ENCODE measurements at regions of chr11 and their contacts with region 1.

Region 1: GRCh38 chr11:118689851-118690552 is 10.6 kb upstream of the TREH start:
- DNase-seq: peak; percentile 90 to 99
- H3K4me3 ChIP-seq: peak overlapping the region in 3 of 4 experiments; percentile 54 to 56 (median 54); a peak in 7 of 8 replicates
- H3K27ac ChIP-seq: peak overlapping the region; percentile 43; the same call in 1 of the 2 replicates
- H3K4me1 ChIP-seq: peaks cover 0 to 19% (median 11%) of the 10 kb centered on the region in 4 experiments; a peak in 6 of 7 replicates
- H3K27me3 ChIP-seq: no peaks in the 10 kb centered on the region
- CTCF ChIP-seq: peak; percentile 96 to 100 (median 97)
- EP300 ChIP-seq: no peak
- POLR2A ChIP-seq: no peak
- RAD21 ChIP-seq: peak; percentile 89 to 92

Region 2: GRCh38 chr11:118251858-118252652 is 437.9 kb before region 1 on chr11 and contains the start of gene MPZL3:
- CTCF ChIA-PET with region 1: no interaction called
- POLR2A ChIA-PET with region 1: no interaction called
- DNase-seq: peak; percentile 29 to 87
- H3K4me3 ChIP-seq: peak within 1 kb of the TSS; percentile 83 to 97 (median 90)
- H3K27ac ChIP-seq: peak within 1 kb of the TSS; percentile 99
- H3K4me1 ChIP-seq: no peaks in the 10 kb centered on the region
- H3K27me3 ChIP-seq: peaks cover 0 to 5% (median under 1%) of the 10 kb centered on the region in 4 experiments; a peak in 2 of 7 replicates
- CTCF ChIP-seq: no peak
- EP300 ChIP-seq: no peak
- POLR2A ChIP-seq: peak; percentile 69 to 72
- RAD21 ChIP-seq: no peak; a peak in 1 of 4 replicates
- total RNA-seq, gene MPZL3: 3.3 and 3.9 TPM in 2 replicates

Region 3: GRCh38 chr11:118679483-118679882 is 10.5 kb before region 1 on chr11 and contains the start of gene TREH:
- CTCF ChIA-PET with region 1: interaction called, 23 read pairs
- POLR2A ChIA-PET with region 1: no interaction called
- DNase-seq: no peak
- H3K4me3 ChIP-seq: no peak within 1 kb of the TSS
- H3K27ac ChIP-seq: no peak within 1 kb of the TSS
- H3K4me1 ChIP-seq: peaks cover 0 to 3% (median under 1%) of the 10 kb centered on the region in 4 experiments; a peak in 2 of 7 replicates
- H3K27me3 ChIP-seq: no peaks in the 10 kb centered on the region
- CTCF ChIP-seq: no peak
- EP300 ChIP-seq: no peak
- POLR2A ChIP-seq: no peak
- RAD21 ChIP-seq: no peak
- total RNA-seq, gene TREH: not detected in 2 replicates

Region 4: GRCh38 chr11:118715245-118715831 is 25.3 kb after region 1 on chr11:
- CTCF ChIA-PET with region 1: interaction called, 9 read pairs
- POLR2A ChIA-PET with region 1: interaction called, 46 read pairs
- DNase-seq: peak in 1 of 2 experiments; percentile 51
- H3K4me3 ChIP-seq: peak overlapping the region in 1 of 4 experiments; percentile 27; a peak in 1 of 8 replicates
- H3K27ac ChIP-seq: peak overlapping the region; percentile 95
- H3K4me1 ChIP-seq: peaks cover 4 to 15% (median 8%) of the 10 kb centered on the region in 4 experiments
- H3K27me3 ChIP-seq: no peaks in the 10 kb centered on the region
- CTCF ChIP-seq: no peak
- EP300 ChIP-seq: no peak
- POLR2A ChIP-seq: peak in 1 of 2 experiments; percentile 41; a peak in 1 of 3 replicates
- RAD21 ChIP-seq: no peak

Region 5: GRCh38 chr11:118749429-118749828 is 59.4 kb after region 1 on chr11:
- CTCF ChIA-PET with region 1: interaction called, 102 read pairs
- POLR2A ChIA-PET with region 1: interaction called, 36 read pairs
- DNase-seq: no peak
- H3K4me3 ChIP-seq: no peak overlapping the region
- H3K27ac ChIP-seq: no peak overlapping the region
- H3K4me1 ChIP-seq: peaks cover 0 to 2% (median 1%) of the 10 kb centered on the region in 4 experiments; a peak in 2 of 7 replicates
- H3K27me3 ChIP-seq: no peaks in the 10 kb centered on the region
- CTCF ChIP-seq: no peak
- EP300 ChIP-seq: no peak
- POLR2A ChIP-seq: no peak
- RAD21 ChIP-seq: no peak

Region 6: GRCh38 chr11:118763041-118763440 is 73.0 kb after region 1 on chr11:
- CTCF ChIA-PET with region 1: interaction called, 85 read pairs
- POLR2A ChIA-PET with region 1: no interaction called
- DNase-seq: no peak
- H3K4me3 ChIP-seq: no peak overlapping the region
- H3K27ac ChIP-seq: no peak overlapping the region
- H3K4me1 ChIP-seq: no peaks in the 10 kb centered on the region
- H3K27me3 ChIP-seq: no peaks in the 10 kb centered on the region
- CTCF ChIP-seq: no peak
- EP300 ChIP-seq: no peak
- POLR2A ChIP-seq: no peak
- RAD21 ChIP-seq: no peak

Region 7: GRCh38 chr11:118791111-118791965 is 101.3 kb after region 1 on chr11 and contains the start of gene DDX6:
- CTCF ChIA-PET with region 1: interaction called, 10 read pairs
- POLR2A ChIA-PET with region 1: interaction called, 30 read pairs
- DNase-seq: peak; percentile 25 to 90
- H3K4me3 ChIP-seq: peak within 1 kb of the TSS; percentile 88 to 100 (median 93)
- H3K27ac ChIP-seq: peak within 1 kb of the TSS; percentile 99
- H3K4me1 ChIP-seq: peaks cover 0 to 3% (median 2%) of the 10 kb centered on the region in 4 experiments; a peak in 3 of 7 replicates
- H3K27me3 ChIP-seq: no peaks in the 10 kb centered on the region
- CTCF ChIP-seq: peak; percentile 28 to 48 (median 40)
- EP300 ChIP-seq: no peak
- POLR2A ChIP-seq: peak; percentile 71 to 94; a peak in 2 of 3 replicates
- RAD21 ChIP-seq: peak; percentile 8 to 28; a peak in 2 of 4 replicates
- total RNA-seq, gene DDX6: 174 and 181 TPM in 2 replicates

Region 8: GRCh38 chr11:118907051-118908042 is 217.3 kb after region 1 on chr11:
- CTCF ChIA-PET with region 1: interaction called, 12 read pairs
- POLR2A ChIA-PET with region 1: no interaction called
- DNase-seq: peak in 1 of 2 experiments; percentile 97
- H3K4me3 ChIP-seq: peak overlapping the region in 3 of 4 experiments; percentile 12 to 38 (median 15); a peak in 4 of 8 replicates
- H3K27ac ChIP-seq: peak overlapping the region; percentile 46; the same call in 1 of the 2 replicates
- H3K4me1 ChIP-seq: peaks cover 4 to 39% (median 31%) of the 10 kb centered on the region in 4 experiments
- H3K27me3 ChIP-seq: no peaks in the 10 kb centered on the region
- CTCF ChIP-seq: peak in 2 of 3 experiments; percentile 95 to 97; a peak in 3 of 4 replicates
- EP300 ChIP-seq: no peak
- POLR2A ChIP-seq: no peak; a peak in 1 of 3 replicates
- RAD21 ChIP-seq: peak; percentile 98 to 100

Measured in H1 (cell line).